CD8-positive, alpha-beta T cell (primary cell): ENCODE measurements at regions of chr4 and their contacts with region 1.

Region 1: DNA sequence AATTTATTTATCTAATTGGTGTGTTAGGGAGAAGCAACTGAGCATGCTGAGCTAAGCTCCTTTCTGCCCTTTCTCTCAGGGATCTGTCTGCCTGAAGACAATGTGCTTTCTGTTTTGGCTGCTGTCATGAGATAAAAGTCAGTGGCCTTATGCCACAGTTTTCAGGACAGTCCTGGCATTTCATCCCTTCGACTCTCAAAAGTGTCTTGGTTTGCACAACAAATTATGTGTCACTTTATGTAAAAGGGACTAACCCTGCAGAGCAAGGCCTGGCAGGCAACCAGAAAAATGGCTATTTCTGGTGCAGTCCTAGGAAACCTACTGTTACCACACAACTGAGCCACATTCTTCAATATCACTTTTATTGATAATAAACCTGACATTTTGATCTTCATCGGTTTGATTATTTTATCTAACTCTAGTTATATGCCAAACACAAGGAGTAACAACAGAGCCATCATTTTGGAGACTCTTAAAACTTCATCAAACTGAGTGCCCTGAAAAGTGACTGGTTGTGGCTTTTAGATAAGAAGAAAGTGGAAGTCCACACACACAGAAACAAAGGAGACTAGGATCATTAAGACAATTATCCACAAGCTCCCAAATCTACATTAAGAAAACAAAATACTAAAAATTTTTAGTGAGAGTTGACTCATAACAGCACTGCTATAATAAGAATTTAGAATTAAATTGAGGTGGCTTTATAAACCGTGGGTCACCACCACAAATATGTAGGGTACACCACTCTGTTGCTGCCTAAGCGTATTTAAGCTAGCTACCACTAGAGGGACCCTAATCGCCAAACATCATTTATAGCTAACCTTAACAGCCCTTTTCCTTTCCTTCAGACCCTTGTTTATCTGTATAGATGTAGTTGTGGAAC is 95.9 kb upstream of the PTPN13 start:
- DNase-seq: peak in 2 of 9 experiments; percentile 27 to 39
- ATAC-seq: no peak
- H3K4me3 ChIP-seq: no peak overlapping the region
- H3K4me3 Mint-ChIP-seq: no peak overlapping the region
- H3K27ac ChIP-seq: no peak overlapping the region
- H3K27ac Mint-ChIP-seq: no peak overlapping the region
- H3K4me1 ChIP-seq: no peaks in the 10 kb centered on the region
- H3K4me1 Mint-ChIP-seq: no peaks in the 10 kb centered on the region
- H3K27me3 ChIP-seq: no peaks in the 10 kb centered on the region
- H3K27me3 Mint-ChIP-seq: no peaks in the 10 kb centered on the region
- CTCF ChIP-seq: peak; percentile 82

Region 2: GRCh38 chr4:86279293-86279960 is 218.8 kb before region 1 on chr4:
- CTCF ChIA-PET with region 1: no interaction called
- POLR2A ChIA-PET with region 1: no interaction called
- intact Hi-C with region 1: no loop called
- DNase-seq: no peak
- ATAC-seq: no peak
- H3K4me3 ChIP-seq: no peak overlapping the region
- H3K4me3 Mint-ChIP-seq: no peak overlapping the region
- H3K27ac ChIP-seq: no peak overlapping the region
- H3K27ac Mint-ChIP-seq: no peak overlapping the region
- H3K4me1 ChIP-seq: no peaks in the 10 kb centered on the region
- H3K4me1 Mint-ChIP-seq: no peaks in the 10 kb centered on the region
- H3K27me3 ChIP-seq: no peaks in the 10 kb centered on the region
- H3K27me3 Mint-ChIP-seq: no peaks in the 10 kb centered on the region
- CTCF ChIP-seq: no peak

Region 3: DNA sequence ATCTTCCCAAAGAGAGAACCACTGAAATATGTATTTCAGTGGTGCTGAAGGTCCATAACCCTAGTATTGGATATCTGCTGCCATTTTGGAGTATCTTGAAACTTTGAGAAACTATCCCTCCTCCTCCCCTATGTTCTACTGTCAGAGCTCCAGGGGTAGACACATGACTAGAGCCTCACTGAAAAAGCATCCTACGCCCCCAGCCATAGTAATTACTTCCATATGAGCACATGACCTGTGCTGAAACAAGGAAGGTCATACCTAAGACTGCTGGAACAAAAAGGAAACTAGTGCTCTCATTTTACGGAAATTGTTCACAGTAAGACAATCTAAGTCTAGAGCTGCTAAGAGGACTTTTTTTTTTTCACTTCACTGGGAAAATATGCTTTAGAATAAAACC is 96.4 kb before region 1 on chr4:
- CTCF ChIA-PET with region 1: no interaction called
- POLR2A ChIA-PET with region 1: no interaction called
- intact Hi-C with region 1: no loop called
- DNase-seq: no peak
- ATAC-seq: no peak
- H3K4me3 ChIP-seq: no peak overlapping the region
- H3K4me3 Mint-ChIP-seq: no peak overlapping the region
- H3K27ac ChIP-seq: no peak overlapping the region
- H3K27ac Mint-ChIP-seq: no peak overlapping the region
- H3K4me1 ChIP-seq: no peaks in the 10 kb centered on the region
- H3K4me1 Mint-ChIP-seq: no peaks in the 10 kb centered on the region
- H3K27me3 ChIP-seq: no peaks in the 10 kb centered on the region
- H3K27me3 Mint-ChIP-seq: no peaks in the 10 kb centered on the region
- CTCF ChIP-seq: no peak

Region 4: GRCh38 chr4:86487738-86488348 is 10.4 kb before region 1 on chr4:
- CTCF ChIA-PET with region 1: interaction called, 23 read pairs
- POLR2A ChIA-PET with region 1: no interaction called
- intact Hi-C with region 1: no loop called
- DNase-seq: no peak
- ATAC-seq: no peak
- H3K4me3 ChIP-seq: no peak overlapping the region
- H3K4me3 Mint-ChIP-seq: no peak overlapping the region
- H3K27ac ChIP-seq: no peak overlapping the region
- H3K27ac Mint-ChIP-seq: no peak overlapping the region
- H3K4me1 ChIP-seq: no peaks in the 10 kb centered on the region
- H3K4me1 Mint-ChIP-seq: peaks cover 3% of the 10 kb centered on the region
- H3K27me3 ChIP-seq: no peaks in the 10 kb centered on the region
- H3K27me3 Mint-ChIP-seq: no peaks in the 10 kb centered on the region
- CTCF ChIP-seq: no peak

Region 5: GRCh38 chr4:86522349-86522748 is 24.1 kb after region 1 on chr4:
- CTCF ChIA-PET with region 1: interaction called, 10 read pairs
- POLR2A ChIA-PET with region 1: interaction called, 3 read pairs
- intact Hi-C with region 1: no loop called
- DNase-seq: no peak
- ATAC-seq: no peak
- H3K4me3 ChIP-seq: no peak overlapping the region
- H3K4me3 Mint-ChIP-seq: no peak overlapping the region
- H3K27ac ChIP-seq: no peak overlapping the region
- H3K27ac Mint-ChIP-seq: no peak overlapping the region
- H3K4me1 ChIP-seq: no peaks in the 10 kb centered on the region
- H3K4me1 Mint-ChIP-seq: no peaks in the 10 kb centered on the region
- H3K27me3 ChIP-seq: no peaks in the 10 kb centered on the region
- H3K27me3 Mint-ChIP-seq: peaks cover 2% of the 10 kb centered on the region
- CTCF ChIP-seq: no peak

Region 6: GRCh38 chr4:86895692-86896488 is 397.7 kb after region 1 on chr4:
- CTCF ChIA-PET with region 1: interaction called, 6 read pairs
- POLR2A ChIA-PET with region 1: no interaction called
- intact Hi-C with region 1: loop called (anchors 1 kb)
- DNase-seq: peak in 3 of 9 experiments; percentile 7 to 59 (median 49)
- ATAC-seq: peak; percentile 56
- H3K4me3 ChIP-seq: no peak overlapping the region
- H3K4me3 Mint-ChIP-seq: no peak overlapping the region
- H3K27ac ChIP-seq: no peak overlapping the region
- H3K27ac Mint-ChIP-seq: no peak overlapping the region
- H3K4me1 ChIP-seq: peaks cover 3% of the 10 kb centered on the region
- H3K4me1 Mint-ChIP-seq: peaks cover 12% of the 10 kb centered on the region
- H3K27me3 ChIP-seq: peaks cover 5 to 9% of the 10 kb centered on the region in 2 experiments
- H3K27me3 Mint-ChIP-seq: peaks cover 17% of the 10 kb centered on the region
- CTCF ChIP-seq: peak; percentile 74